ENCODE measurements at regions of chr5 and their contacts with region 1.

Region 1: GRCh38 chr5:135977375-135977928 is 22.7 kb upstream of the LECT2 start:
- DNase-seq: peak; percentile 62 to 95
- ATAC-seq: peak; percentile 97 to 99
- H3K4me3 ChIP-seq: no peak overlapping the region
- H3K27ac ChIP-seq: peak overlapping the region; percentile 85 to 86
- H3K4me1 ChIP-seq: peaks cover 64% of the 10 kb centered on the region
- CTCF ChIP-seq: peak; percentile 82
- EP300 ChIP-seq: peak; percentile 86 to 93; a peak in 4 of 5 replicates
- POLR2A ChIP-seq: no peak
- RAD21 ChIP-seq: peak; percentile 88 to 90

Region 2: GRCh38 chr5:135901633-135902032 is 75.8 kb before region 1 on chr5:
- CTCF ChIA-PET with region 1: no interaction called
- POLR2A ChIA-PET with region 1: no interaction called
- DNase-seq: no peak
- ATAC-seq: no peak
- H3K4me3 ChIP-seq: no peak overlapping the region
- H3K27ac ChIP-seq: no peak overlapping the region
- H3K4me1 ChIP-seq: no peaks in the 10 kb centered on the region
- CTCF ChIP-seq: no peak
- EP300 ChIP-seq: no peak
- POLR2A ChIP-seq: no peak
- RAD21 ChIP-seq: no peak

Region 3: DNA sequence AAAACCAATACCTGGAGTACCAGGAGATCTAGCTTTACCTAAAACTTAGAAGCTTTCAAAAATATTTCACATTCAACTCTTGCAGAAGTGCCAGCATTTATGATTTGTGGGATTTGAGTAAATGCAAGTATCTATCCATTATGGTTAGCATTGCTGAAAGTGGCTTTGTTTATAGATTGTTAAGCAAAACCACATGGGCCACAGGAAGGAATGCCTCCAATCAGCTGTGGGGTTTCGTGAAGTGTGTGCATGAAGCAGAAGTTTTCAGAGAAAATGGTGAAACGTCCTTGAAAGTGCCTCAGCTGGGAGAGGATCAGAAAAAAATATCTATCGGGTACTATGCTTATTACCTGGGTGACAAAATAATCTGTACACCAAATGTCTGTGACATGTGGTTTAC is 26.8 kb before region 1 on chr5:
- CTCF ChIA-PET with region 1: interaction called, 12 read pairs
- POLR2A ChIA-PET with region 1: no interaction called
- DNase-seq: no peak
- ATAC-seq: no peak
- H3K4me3 ChIP-seq: no peak overlapping the region
- H3K27ac ChIP-seq: no peak overlapping the region
- H3K4me1 ChIP-seq: peaks cover 1% of the 10 kb centered on the region
- CTCF ChIP-seq: no peak
- EP300 ChIP-seq: no peak
- POLR2A ChIP-seq: no peak
- RAD21 ChIP-seq: no peak

Region 4: GRCh38 chr5:135999406-136000139 is 22.1 kb after region 1 on chr5:
- CTCF ChIA-PET with region 1: interaction called, 25 read pairs
- POLR2A ChIA-PET with region 1: no interaction called
- DNase-seq: peak in 1 of 2 experiments; percentile 55
- ATAC-seq: peak; percentile 33 to 65; a peak in 3 of 6 replicates
- H3K4me3 ChIP-seq: no peak overlapping the region
- H3K27ac ChIP-seq: peak overlapping the region; percentile 53 to 85
- H3K4me1 ChIP-seq: peaks cover 39% of the 10 kb centered on the region
- CTCF ChIP-seq: no peak
- EP300 ChIP-seq: no peak
- POLR2A ChIP-seq: no peak
- RAD21 ChIP-seq: no peak

Region 5: GRCh38 chr5:136020383-136021015 is 43.0 kb after region 1 on chr5:
- CTCF ChIA-PET with region 1: interaction called, 50 read pairs
- POLR2A ChIA-PET with region 1: interaction called, 4 read pairs
- DNase-seq: peak; percentile 89 to 95
- ATAC-seq: peak; percentile 79 to 83
- H3K4me3 ChIP-seq: no peak overlapping the region
- H3K27ac ChIP-seq: peak overlapping the region; percentile 96 to 97
- H3K4me1 ChIP-seq: peaks cover 63% of the 10 kb centered on the region
- CTCF ChIP-seq: no peak
- EP300 ChIP-seq: peak; percentile 72 to 93; a peak in 4 of 5 replicates
- POLR2A ChIP-seq: no peak
- RAD21 ChIP-seq: peak in 1 of 2 experiments; percentile 54; a peak in 2 of 5 replicates

Region 6: GRCh38 chr5:136042665-136043121 is 65.2 kb after region 1 on chr5:
- CTCF ChIA-PET with region 1: interaction called, 15 read pairs
- POLR2A ChIA-PET with region 1: interaction called, 16 read pairs
- DNase-seq: no peak
- ATAC-seq: no peak
- H3K4me3 ChIP-seq: no peak overlapping the region
- H3K27ac ChIP-seq: peak overlapping the region; percentile 23 to 77; a peak in 4 of 6 replicates
- H3K4me1 ChIP-seq: peaks cover 89% of the 10 kb centered on the region
- CTCF ChIP-seq: no peak
- EP300 ChIP-seq: no peak
- POLR2A ChIP-seq: no peak
- RAD21 ChIP-seq: no peak